ENCODE measurements at regions of chr3 and their contacts with region 1.

Region 1: DNA sequence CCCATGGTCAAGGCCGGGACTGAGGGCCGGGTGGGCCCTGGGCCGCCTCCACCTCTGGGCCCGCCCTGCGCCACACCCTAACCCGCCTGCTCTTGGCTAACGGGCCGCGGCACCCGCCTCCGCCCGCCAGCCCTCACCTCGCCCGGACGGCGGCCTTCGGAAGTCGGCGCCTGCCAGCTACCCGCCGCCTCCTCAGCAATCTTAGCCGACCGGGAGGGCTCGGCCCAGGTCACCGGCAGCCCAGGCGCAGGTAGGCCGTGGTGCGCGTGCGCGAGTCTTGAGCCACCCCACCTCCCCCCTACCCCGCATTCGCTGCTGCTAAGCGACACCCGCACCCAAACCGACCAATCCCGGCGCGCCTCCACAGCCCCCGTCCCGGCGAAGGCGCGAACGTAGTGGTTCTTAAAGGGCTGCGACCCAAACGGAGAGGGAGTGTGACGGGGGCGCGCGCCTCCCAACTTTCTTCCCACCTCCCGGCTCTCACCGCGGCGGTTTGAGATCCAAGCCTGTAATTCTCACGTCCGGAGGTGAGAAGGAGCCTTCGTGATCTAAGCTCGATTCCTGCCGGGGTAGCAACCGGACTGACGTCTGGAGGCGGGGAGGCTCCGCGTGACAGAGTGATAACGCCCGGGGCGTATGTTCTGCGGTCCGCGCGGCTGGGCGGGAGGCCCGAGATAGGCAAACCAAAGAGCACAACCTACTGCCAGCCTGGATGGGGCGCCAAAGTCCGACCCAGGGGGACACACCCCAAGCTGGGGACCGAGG is at the start of gene SEC22C:
- DNase-seq: peak; percentile 97
- ATAC-seq: peak; percentile 89
- H3K4me3 ChIP-seq: peak within 1 kb of the TSS; percentile 52 to 87 (median 80)
- H3K4me3 Mint-ChIP-seq: peak within 1 kb of the TSS; percentile 96
- H3K27ac ChIP-seq: peak within 1 kb of the TSS; percentile 92 to 98
- H3K27ac Mint-ChIP-seq: peak within 1 kb of the TSS; percentile 98
- H3K4me1 ChIP-seq: peaks cover 14% of the 10 kb centered on the region in 2 donors
- H3K4me1 Mint-ChIP-seq: peaks cover 37% of the 10 kb centered on the region
- H3K27me3 ChIP-seq: no peaks in the 10 kb centered on the region
- H3K27me3 Mint-ChIP-seq: no peaks in the 10 kb centered on the region
- CTCF ChIP-seq: peak; percentile 73
- total RNA-seq, gene SEC22C: 44.8 and 51.4 TPM in 2 replicates

Region 2: DNA sequence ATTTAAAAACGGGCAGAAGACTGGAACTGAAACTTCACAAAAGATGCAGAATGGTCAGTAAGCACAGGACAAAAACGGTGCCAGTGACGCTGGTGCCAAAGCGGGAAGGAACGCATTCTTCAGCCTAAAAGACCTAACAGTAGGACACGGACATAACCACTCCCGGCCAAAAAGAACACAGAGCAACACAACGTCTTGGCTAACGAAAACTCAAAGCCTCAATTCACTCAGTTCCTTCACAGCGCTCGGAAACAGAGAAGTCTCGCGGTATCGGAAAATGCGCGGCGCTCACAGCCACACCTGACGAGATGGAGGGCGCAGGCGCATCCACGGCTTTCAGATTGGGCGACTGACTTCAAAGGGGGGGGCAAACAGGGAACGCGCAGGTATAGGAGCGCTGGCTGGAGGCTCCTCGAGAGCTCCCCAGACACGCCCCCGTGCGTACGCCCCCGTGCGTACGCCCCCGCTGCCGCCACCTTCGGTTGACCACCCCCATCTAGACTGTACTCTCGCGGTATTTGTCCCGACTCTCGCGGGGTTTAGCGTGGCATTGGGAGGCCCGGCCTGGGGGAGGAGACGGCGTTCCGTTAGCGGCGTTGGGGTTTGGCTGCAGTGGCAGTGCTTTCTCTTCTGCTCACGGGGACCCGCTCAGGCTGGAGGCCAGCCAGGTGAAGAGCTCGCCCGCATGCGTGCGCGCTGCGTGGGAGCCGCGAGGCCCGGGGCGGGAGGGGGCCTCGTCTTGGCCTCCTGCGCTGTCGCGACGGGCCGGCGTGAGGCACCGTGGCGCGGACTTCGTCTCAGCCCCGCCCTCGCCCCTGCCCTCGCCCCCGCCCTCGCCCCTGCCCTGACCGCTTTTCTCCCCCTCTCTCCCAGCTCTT is 18.5 kb after region 1 on chr3 and contains the start of gene NKTR:
- CTCF ChIA-PET with region 1: interaction called, 36 read pairs
- POLR2A ChIA-PET with region 1: interaction called, 17 read pairs
- intact Hi-C with region 1: loop called (anchors 1 kb)
- DNase-seq: peak; percentile 100
- ATAC-seq: peak; percentile 93
- H3K4me3 ChIP-seq: peak within 1 kb of the TSS; percentile 80 to 88 (median 86)
- H3K4me3 Mint-ChIP-seq: peak within 1 kb of the TSS; percentile 99
- H3K27ac ChIP-seq: peak within 1 kb of the TSS; percentile 84 to 88
- H3K27ac Mint-ChIP-seq: peak within 1 kb of the TSS; percentile 99
- H3K4me1 ChIP-seq: peaks cover 11 to 19% of the 10 kb centered on the region in 2 donors
- H3K4me1 Mint-ChIP-seq: peaks cover 30% of the 10 kb centered on the region
- H3K27me3 ChIP-seq: no peaks in the 10 kb centered on the region
- H3K27me3 Mint-ChIP-seq: no peaks in the 10 kb centered on the region
- CTCF ChIP-seq: no peak
- total RNA-seq, gene NKTR: 227 and 233 TPM in 2 replicates

Region 3: GRCh38 chr3:42613462-42613861 is 31.6 kb after region 1 on chr3:
- CTCF ChIA-PET with region 1: interaction called, 8 read pairs
- POLR2A ChIA-PET with region 1: no interaction called
- intact Hi-C with region 1: loop called (anchors 5 kb)
- DNase-seq: peak; percentile 35
- ATAC-seq: no peak
- H3K4me3 ChIP-seq: no peak overlapping the region
- H3K4me3 Mint-ChIP-seq: peak overlapping the region; percentile 0
- H3K27ac ChIP-seq: peak overlapping the region in 1 of 2 donors; percentile 38
- H3K27ac Mint-ChIP-seq: no peak overlapping the region
- H3K4me1 ChIP-seq: peaks cover 2 to 18% of the 10 kb centered on the region in 2 donors
- H3K4me1 Mint-ChIP-seq: peaks cover 35% of the 10 kb centered on the region
- H3K27me3 ChIP-seq: no peaks in the 10 kb centered on the region
- H3K27me3 Mint-ChIP-seq: no peaks in the 10 kb centered on the region
- CTCF ChIP-seq: peak; percentile 69

Region 4: DNA sequence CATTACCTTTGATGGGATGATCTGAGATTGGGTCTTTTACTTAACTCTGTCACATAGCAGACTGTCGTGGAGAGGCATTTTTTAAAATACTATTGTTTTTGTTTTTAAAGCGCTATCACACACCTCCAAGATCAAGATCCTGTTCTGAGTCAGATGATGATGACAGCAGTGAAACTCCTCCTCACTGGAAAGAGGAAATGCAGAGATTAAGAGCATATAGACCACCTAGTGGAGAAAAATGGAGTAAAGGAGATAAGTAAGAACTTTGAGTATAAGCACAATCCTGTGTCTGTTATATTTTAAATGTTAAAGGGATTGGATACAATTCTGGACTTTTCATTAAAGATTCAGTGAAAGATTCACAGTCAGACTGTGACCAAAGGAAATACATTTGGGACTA is 53.2 kb after region 1 on chr3:
- CTCF ChIA-PET with region 1: interaction called, 14 read pairs
- POLR2A ChIA-PET with region 1: no interaction called
- intact Hi-C with region 1: loop called (anchors 1 kb)
- DNase-seq: peak; percentile 61
- ATAC-seq: peak; percentile 78
- H3K4me3 ChIP-seq: no peak overlapping the region
- H3K4me3 Mint-ChIP-seq: no peak overlapping the region
- H3K27ac ChIP-seq: no peak overlapping the region
- H3K27ac Mint-ChIP-seq: no peak overlapping the region
- H3K4me1 ChIP-seq: no peaks in the 10 kb centered on the region
- H3K4me1 Mint-ChIP-seq: no peaks in the 10 kb centered on the region
- H3K27me3 ChIP-seq: no peaks in the 10 kb centered on the region
- H3K27me3 Mint-ChIP-seq: no peaks in the 10 kb centered on the region
- CTCF ChIP-seq: peak; percentile 54

Region 5: DNA sequence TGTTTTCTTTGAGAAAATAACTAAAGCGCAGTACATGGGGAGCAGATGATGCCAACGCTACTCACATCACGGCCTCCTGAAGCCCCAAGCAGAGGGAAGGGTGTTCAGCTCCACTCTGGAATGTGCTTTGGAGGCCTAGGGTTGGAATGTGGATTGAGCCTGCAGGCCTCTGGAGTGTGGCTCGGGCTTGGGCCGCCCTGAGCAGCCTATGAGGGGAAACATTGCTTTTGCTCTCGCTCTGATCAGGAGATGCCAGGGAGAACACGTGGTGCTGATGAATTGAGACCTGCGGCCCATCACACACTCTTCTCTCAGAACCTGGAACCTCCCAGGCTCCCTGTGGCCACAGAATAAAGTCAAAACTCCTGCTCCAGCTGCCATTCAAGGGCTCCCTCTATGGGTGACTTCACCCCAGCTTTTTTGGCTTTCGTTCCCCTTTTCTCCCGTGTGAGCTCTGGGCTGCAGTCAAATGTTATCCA is 167.9 kb after region 1 on chr3:
- CTCF ChIA-PET with region 1: interaction called, 31 read pairs
- POLR2A ChIA-PET with region 1: no interaction called
- intact Hi-C with region 1: loop called (anchors 1 kb)
- DNase-seq: peak; percentile 20
- ATAC-seq: peak; percentile 10
- H3K4me3 ChIP-seq: no peak overlapping the region
- H3K4me3 Mint-ChIP-seq: no peak overlapping the region
- H3K27ac ChIP-seq: no peak overlapping the region
- H3K27ac Mint-ChIP-seq: no peak overlapping the region
- H3K4me1 ChIP-seq: peaks cover 0 to 3% of the 10 kb centered on the region in 2 donors
- H3K4me1 Mint-ChIP-seq: peaks cover 9% of the 10 kb centered on the region
- H3K27me3 ChIP-seq: no peaks in the 10 kb centered on the region
- H3K27me3 Mint-ChIP-seq: no peaks in the 10 kb centered on the region
- CTCF ChIP-seq: peak; percentile 14

Region 6: DNA sequence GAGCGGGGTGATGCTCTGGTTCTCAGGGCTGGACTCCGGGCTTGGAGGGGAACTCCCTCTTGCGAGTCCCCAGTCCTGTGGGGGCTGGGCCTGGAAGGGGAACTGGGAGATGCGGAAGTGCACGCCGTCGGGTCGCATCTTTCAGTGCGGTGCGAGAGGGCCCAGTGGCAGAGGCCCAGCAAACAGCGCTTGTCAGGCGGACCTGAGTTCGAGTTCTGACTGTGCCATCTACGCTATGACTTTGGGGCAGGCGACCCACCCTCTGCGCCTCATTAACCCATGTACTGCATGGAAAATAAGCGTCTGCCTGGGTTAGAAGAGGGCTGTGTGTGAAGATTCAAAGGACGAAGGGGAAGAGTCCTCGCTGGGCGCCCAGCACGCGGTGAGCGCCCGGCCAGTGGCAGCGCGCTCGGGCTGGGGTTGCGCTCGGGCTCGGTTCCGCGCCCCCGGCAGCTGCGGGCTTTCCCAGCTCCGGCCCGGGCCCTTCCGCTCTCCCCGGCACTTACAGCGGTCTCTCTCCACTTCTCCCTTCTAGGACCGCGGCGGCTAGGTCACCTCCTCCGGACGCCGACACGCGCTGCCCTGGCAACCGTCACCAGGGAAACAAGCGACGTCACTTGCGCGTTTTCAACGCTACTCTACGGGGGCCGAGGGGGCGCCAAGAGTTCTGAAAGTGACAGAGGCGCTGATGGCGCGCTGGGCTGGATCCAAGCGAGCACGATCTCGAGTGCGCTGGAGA is 190.9 kb after region 1 on chr3 and contains the start of gene CCDC13:
- CTCF ChIA-PET with region 1: no interaction called
- POLR2A ChIA-PET with region 1: no interaction called
- intact Hi-C with region 1: loop called (anchors 2 kb)
- DNase-seq: peak; percentile 98
- ATAC-seq: peak; percentile 88
- H3K4me3 ChIP-seq: peak within 1 kb of the TSS; percentile 46 to 87 (median 62)
- H3K4me3 Mint-ChIP-seq: peak within 1 kb of the TSS; percentile 90
- H3K27ac ChIP-seq: peak within 1 kb of the TSS; percentile 66 to 81
- H3K27ac Mint-ChIP-seq: peak within 1 kb of the TSS; percentile 92
- H3K4me1 ChIP-seq: peaks cover 4 to 10% of the 10 kb centered on the region in 2 donors
- H3K4me1 Mint-ChIP-seq: peaks cover 11% of the 10 kb centered on the region
- H3K27me3 ChIP-seq: no peaks in the 10 kb centered on the region
- H3K27me3 Mint-ChIP-seq: no peaks in the 10 kb centered on the region
- CTCF ChIP-seq: no peak
- total RNA-seq, gene CCDC13: 1.9 and 2.5 TPM in 2 replicates

Region 7: GRCh38 chr3:43105596-43106292 is 523.9 kb after region 1 on chr3 and contains the start of gene POMGNT2:
- CTCF ChIA-PET with region 1: no interaction called
- POLR2A ChIA-PET with region 1: no interaction called
- intact Hi-C with region 1: loop called (anchors 10 kb)
- DNase-seq: peak; percentile 91
- ATAC-seq: peak; percentile 96
- H3K4me3 ChIP-seq: peak within 1 kb of the TSS; percentile 21 to 79 (median 72)
- H3K4me3 Mint-ChIP-seq: peak within 1 kb of the TSS; percentile 87
- H3K27ac ChIP-seq: peak within 1 kb of the TSS in 1 of 2 donors; percentile 65
- H3K27ac Mint-ChIP-seq: peak within 1 kb of the TSS; percentile 32
- H3K4me1 ChIP-seq: peaks cover 9 to 14% of the 10 kb centered on the region in 2 donors
- H3K4me1 Mint-ChIP-seq: peaks cover 14% of the 10 kb centered on the region
- H3K27me3 ChIP-seq: no peaks in the 10 kb centered on the region
- H3K27me3 Mint-ChIP-seq: no peaks in the 10 kb centered on the region
- CTCF ChIP-seq: no peak
- total RNA-seq, gene POMGNT2: 2.3 and 2.8 TPM in 2 replicates

Measured in B cell (primary cell).